PC-9 (cell line): ENCODE measurements at regions of chr3 and their contacts with region 1.

Region 1: GRCh38 chr3:57007513-57008460 is 52.7 kb upstream of the SPATA12 start:
- DNase-seq: peak; percentile 65 to 80
- H3K4me3 ChIP-seq: peak overlapping the region; percentile 51; the same call in 1 of the 2 replicates
- H3K27ac ChIP-seq: peak overlapping the region; percentile 98
- H3K4me1 ChIP-seq: peaks cover 39% of the 10 kb centered on the region
- H3K27me3 ChIP-seq: no peaks in the 10 kb centered on the region
- CTCF ChIP-seq: no peak

Region 2: GRCh38 chr3:56323986-56324420 is 683.8 kb before region 1 on chr3:
- CTCF ChIA-PET with region 1: no interaction called
- POLR2A ChIA-PET with region 1: no interaction called
- intact Hi-C with region 1: no loop called
- DNase-seq: no peak
- H3K4me3 ChIP-seq: no peak overlapping the region
- H3K27ac ChIP-seq: no peak overlapping the region
- H3K4me1 ChIP-seq: no peaks in the 10 kb centered on the region
- H3K27me3 ChIP-seq: no peaks in the 10 kb centered on the region
- CTCF ChIP-seq: no peak

Region 3: DNA sequence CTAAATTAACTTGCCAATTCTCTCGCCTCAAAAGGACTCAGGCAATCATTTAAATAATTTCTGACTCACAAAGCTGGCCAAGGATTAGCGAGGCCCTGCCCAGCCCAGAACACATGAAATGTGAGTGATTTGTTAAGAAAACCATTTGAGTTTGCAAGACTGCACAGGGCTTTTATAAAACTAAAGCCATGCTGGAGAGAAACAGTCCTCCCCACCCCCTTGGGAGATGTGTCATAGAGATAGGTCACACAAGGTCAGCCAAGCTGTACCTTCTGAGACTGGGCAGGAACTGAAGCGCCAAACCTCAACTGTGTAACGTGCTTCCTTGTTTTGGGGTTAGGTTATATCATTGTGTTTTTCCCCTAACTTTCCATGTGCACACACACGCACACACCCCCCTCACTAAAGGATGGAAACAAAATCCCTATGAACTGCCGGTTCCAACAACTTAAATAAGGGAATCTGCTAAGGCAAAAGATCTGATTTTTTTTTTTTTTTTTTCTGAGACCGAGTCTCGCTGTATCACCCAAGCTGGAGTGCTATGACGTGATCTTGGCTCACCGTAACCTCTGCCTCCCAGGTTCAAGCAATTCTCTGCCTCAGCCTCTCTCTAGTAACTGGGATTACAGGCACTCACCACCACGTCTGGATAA is 60.8 kb after region 1 on chr3:
- CTCF ChIA-PET with region 1: no interaction called
- POLR2A ChIA-PET with region 1: interaction called, 3 read pairs
- intact Hi-C with region 1: loop called (anchors 1 kb)
- DNase-seq: peak; percentile 78 to 97
- H3K4me3 ChIP-seq: peak overlapping the region; percentile 38; the same call in 1 of the 2 replicates
- H3K27ac ChIP-seq: peak overlapping the region; percentile 91
- H3K4me1 ChIP-seq: peaks cover 60% of the 10 kb centered on the region
- H3K27me3 ChIP-seq: no peaks in the 10 kb centered on the region
- CTCF ChIP-seq: no peak

Region 4: GRCh38 chr3:57100046-57100695 is 92.4 kb after region 1 on chr3:
- CTCF ChIA-PET with region 1: no interaction called
- POLR2A ChIA-PET with region 1: no interaction called
- intact Hi-C with region 1: loop called (anchors 1 kb)
- DNase-seq: peak; percentile 48 to 63
- H3K4me3 ChIP-seq: no peak overlapping the region
- H3K27ac ChIP-seq: 0 out of 2 replicates have a peak overlapping the region, but pooled peaks have one; percentile 62
- H3K4me1 ChIP-seq: peaks cover 20% of the 10 kb centered on the region
- H3K27me3 ChIP-seq: no peaks in the 10 kb centered on the region
- CTCF ChIP-seq: peak; percentile 85

Region 5: GRCh38 chr3:57227204-57227929 is 219.6 kb after region 1 on chr3 and contains the start of gene APPL1:
- CTCF ChIA-PET with region 1: no interaction called
- POLR2A ChIA-PET with region 1: no interaction called
- intact Hi-C with region 1: loop called (anchors 10 kb)
- DNase-seq: peak; percentile 78 to 97
- H3K4me3 ChIP-seq: peak within 1 kb of the TSS; percentile 66
- H3K27ac ChIP-seq: peak within 1 kb of the TSS; percentile 57
- H3K4me1 ChIP-seq: peaks cover 27% of the 10 kb centered on the region
- H3K27me3 ChIP-seq: no peaks in the 10 kb centered on the region
- CTCF ChIP-seq: no peak
- total RNA-seq, gene APPL1: 24.2 and 34.1 TPM in 2 replicates

Region 6: GRCh38 chr3:57244946-57245345 is 237.2 kb after region 1 on chr3:
- CTCF ChIA-PET with region 1: no interaction called
- POLR2A ChIA-PET with region 1: no interaction called
- intact Hi-C with region 1: no loop called
- DNase-seq: no peak
- H3K4me3 ChIP-seq: no peak overlapping the region
- H3K27ac ChIP-seq: no peak overlapping the region
- H3K4me1 ChIP-seq: no peaks in the 10 kb centered on the region
- H3K27me3 ChIP-seq: no peaks in the 10 kb centered on the region
- CTCF ChIP-seq: no peak

Region 7: DNA sequence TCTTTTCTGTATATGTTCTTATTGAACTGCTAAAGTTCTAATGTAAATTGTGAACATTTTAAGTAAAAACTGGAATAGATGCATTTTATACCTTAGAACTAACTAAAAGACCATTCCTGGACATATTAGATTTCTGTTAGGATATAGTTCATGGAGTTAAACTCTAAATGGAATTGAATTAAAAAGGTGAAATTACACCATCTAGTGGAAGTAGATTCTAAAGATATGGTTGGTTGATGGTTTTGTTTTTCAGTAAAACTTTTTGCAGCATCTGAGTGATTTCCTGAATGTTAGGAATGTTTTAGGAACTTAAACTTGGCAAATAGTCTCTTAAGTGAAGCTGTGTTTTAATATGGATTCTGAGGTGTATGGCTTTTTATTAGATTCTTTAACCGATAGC is 845.1 kb after region 1 on chr3:
- CTCF ChIA-PET with region 1: no interaction called
- POLR2A ChIA-PET with region 1: no interaction called
- intact Hi-C with region 1: loop called (anchors 10 kb)
- DNase-seq: no peak
- H3K4me3 ChIP-seq: no peak overlapping the region
- H3K27ac ChIP-seq: no peak overlapping the region
- H3K4me1 ChIP-seq: no peaks in the 10 kb centered on the region
- H3K27me3 ChIP-seq: no peaks in the 10 kb centered on the region
- CTCF ChIP-seq: peak; percentile 59